Activated CD4-positive, alpha-beta memory T cell treated with anti-CD3 and anti-CD28 coated beads, Interleukin-2, amount 10 ng/mL, durations not matched to agents 7 days and 5 days (primary cell): ENCODE measurements at regions of chr1 and their contacts with region 1.

Region 1: GRCh38 chr1:153633716-153634665 is at the start of gene CHTOP:
- DNase-seq: peak; percentile 98
- H3K4me3 Mint-ChIP-seq: peak within 1 kb of the TSS; percentile 97
- H3K27ac Mint-ChIP-seq: peak within 1 kb of the TSS; percentile 100
- H3K4me1 Mint-ChIP-seq: peaks cover 48% of the 10 kb centered on the region
- H3K27me3 Mint-ChIP-seq: no peaks in the 10 kb centered on the region
- total RNA-seq, gene CHTOP: 84.7 to 87.1 TPM

Region 2: DNA sequence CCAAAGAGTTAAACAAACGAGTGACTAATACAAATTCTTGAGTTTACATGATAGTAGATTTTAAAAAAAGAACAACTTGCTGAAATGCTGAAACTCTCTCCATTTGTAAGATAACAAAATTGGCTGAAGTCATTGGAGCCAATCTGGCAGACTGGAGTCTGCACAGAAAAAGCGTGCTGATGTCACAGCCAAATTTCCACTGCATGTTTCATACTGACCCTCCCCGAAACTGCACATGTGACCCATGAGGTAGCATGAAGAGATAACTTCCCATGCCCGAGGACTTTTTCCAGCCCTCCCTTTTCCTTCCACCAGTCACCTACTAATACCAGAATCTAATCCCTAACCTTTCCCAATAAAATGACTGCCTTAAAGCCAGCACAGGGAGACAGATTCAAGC is 432.0 kb before region 1 on chr1:
- CTCF ChIA-PET with region 1: no interaction called
- POLR2A ChIA-PET with region 1: no interaction called
- DNase-seq: no peak
- H3K4me3 Mint-ChIP-seq: no peak overlapping the region
- H3K27ac Mint-ChIP-seq: no peak overlapping the region
- H3K4me1 Mint-ChIP-seq: no peaks in the 10 kb centered on the region
- H3K27me3 Mint-ChIP-seq: peaks cover 29% of the 10 kb centered on the region

Region 3: GRCh38 chr1:153532769-153533599 is 101.0 kb before region 1 on chr1:
- CTCF ChIA-PET with region 1: interaction called, 19 read pairs
- POLR2A ChIA-PET with region 1: interaction called, 99 read pairs
- DNase-seq: peak; percentile 89
- H3K4me3 Mint-ChIP-seq: peak overlapping the region; percentile 99
- H3K27ac Mint-ChIP-seq: peak overlapping the region; percentile 94
- H3K4me1 Mint-ChIP-seq: peaks cover 69% of the 10 kb centered on the region
- H3K27me3 Mint-ChIP-seq: no peaks in the 10 kb centered on the region

Region 4: DNA sequence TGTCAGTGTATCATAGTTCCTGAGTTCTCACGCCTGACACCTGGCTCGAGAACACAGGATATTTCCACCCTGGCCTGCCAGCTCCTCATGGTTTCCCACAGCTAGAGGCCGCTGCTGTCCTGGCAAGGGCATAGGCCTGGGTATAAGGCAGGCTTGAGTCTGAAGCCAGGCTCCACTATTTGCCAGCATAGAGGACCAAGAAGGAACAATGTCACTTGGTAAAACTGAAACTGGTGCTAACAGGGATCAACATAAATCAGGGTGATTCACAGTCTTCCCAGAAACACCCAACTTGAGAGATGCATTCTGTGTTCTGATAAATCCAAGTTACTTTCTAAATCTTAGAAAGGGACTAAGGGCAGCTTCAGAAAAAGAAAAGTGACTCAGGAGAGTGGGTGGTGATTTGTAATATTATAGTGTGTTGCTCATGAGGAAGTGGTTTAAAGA is 61.4 kb before region 1 on chr1:
- CTCF ChIA-PET with region 1: interaction called, 12 read pairs
- POLR2A ChIA-PET with region 1: interaction called, 8 read pairs
- DNase-seq: peak; percentile 69
- H3K4me3 Mint-ChIP-seq: no peak overlapping the region
- H3K27ac Mint-ChIP-seq: peak overlapping the region; percentile 54
- H3K4me1 Mint-ChIP-seq: peaks cover 49% of the 10 kb centered on the region
- H3K27me3 Mint-ChIP-seq: peaks cover 9% of the 10 kb centered on the region

Region 5: DNA sequence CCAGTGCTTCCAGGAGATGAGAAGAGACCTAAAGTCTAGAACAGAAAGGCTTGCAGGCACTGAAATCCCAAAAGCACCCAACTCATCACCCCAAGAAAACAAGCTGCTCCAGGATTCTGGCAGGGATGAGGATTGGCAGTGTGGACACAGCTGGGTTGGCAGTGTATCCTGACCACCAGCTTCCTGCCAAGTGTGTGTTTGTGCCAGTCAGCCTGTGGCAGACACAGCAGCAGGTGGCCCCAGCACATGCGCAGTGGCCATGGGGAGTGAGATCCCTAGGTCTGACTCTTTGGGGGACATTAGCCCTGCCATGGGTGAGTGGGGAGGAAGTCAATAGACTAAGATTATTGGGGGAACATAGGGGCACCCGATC is 15.9 kb after region 1 on chr1:
- CTCF ChIA-PET with region 1: interaction called, 9 read pairs
- POLR2A ChIA-PET with region 1: interaction called, 52 read pairs
- DNase-seq: no peak
- H3K4me3 Mint-ChIP-seq: no peak overlapping the region
- H3K27ac Mint-ChIP-seq: no peak overlapping the region
- H3K4me1 Mint-ChIP-seq: peaks cover 20% of the 10 kb centered on the region
- H3K27me3 Mint-ChIP-seq: no peaks in the 10 kb centered on the region

Region 6: GRCh38 chr1:153670859-153671627 is 37.1 kb after region 1 on chr1 and contains the start of gene ILF2:
- CTCF ChIA-PET with region 1: interaction called, 11 read pairs
- POLR2A ChIA-PET with region 1: interaction called, 29 read pairs
- DNase-seq: peak; percentile 98
- H3K4me3 Mint-ChIP-seq: no peak within 1 kb of the TSS
- H3K27ac Mint-ChIP-seq: no peak within 1 kb of the TSS
- H3K4me1 Mint-ChIP-seq: peaks cover 40% of the 10 kb centered on the region
- H3K27me3 Mint-ChIP-seq: no peaks in the 10 kb centered on the region
- total RNA-seq, gene ILF2: 166 to 169 TPM

Region 7: DNA sequence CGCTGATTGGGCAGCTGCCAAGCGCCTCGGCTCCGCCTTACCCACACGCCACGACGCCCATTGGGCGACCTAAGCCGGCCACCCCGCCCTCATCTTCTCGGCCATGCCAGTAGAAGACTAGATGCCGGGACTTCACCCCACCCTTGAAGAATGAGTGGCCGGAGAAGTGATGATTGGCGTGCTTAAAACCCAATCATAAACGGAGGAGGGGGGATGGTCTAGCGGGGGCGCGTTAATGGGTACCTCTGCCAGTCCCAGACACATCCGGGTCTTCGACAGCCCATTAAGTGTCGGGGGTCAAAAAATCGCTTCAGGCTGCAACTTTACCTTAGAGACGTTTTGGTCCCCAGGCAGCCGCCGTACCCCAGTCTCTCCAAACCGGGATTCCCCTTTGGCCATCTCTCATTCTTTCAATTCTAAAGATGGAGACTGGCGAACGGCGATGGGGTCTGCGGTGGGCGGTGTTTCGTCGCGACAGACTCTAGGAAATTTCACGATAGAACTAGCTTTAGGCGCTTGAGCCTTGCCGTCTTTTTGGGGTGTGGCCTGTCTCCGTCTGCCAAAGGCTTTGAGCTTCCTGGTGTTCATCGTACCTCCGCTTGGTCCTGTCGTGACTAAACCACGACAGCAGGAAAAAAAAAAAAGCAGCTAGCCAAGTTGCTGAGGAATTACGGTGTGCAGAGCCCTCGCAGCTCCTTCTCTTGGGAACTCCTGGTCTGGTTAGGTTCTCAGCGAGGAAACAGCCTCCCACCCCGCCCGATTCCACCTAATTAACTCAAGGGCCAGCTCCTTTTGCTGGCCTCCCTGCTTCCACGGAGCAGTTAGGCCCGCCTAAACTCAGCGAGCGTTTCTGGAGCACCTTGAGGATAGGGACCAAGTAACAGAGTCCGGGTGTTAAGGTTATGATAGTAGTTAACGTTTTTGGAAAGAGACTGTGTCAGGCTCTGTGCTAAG is 289.3 kb after region 1 on chr1 and contains the start of gene GATAD2B:
- CTCF ChIA-PET with region 1: no interaction called
- POLR2A ChIA-PET with region 1: interaction called, 14 read pairs
- DNase-seq: peak; percentile 99
- H3K4me3 Mint-ChIP-seq: peak within 1 kb of the TSS; percentile 92
- H3K27ac Mint-ChIP-seq: peak within 1 kb of the TSS; percentile 88
- H3K4me1 Mint-ChIP-seq: peaks cover 42% of the 10 kb centered on the region
- H3K27me3 Mint-ChIP-seq: no peaks in the 10 kb centered on the region
- total RNA-seq, gene GATAD2B: 70.8 to 71.1 TPM